ENCODE measurements at regions of chr22 and their contacts with region 1.

Region 1: DNA sequence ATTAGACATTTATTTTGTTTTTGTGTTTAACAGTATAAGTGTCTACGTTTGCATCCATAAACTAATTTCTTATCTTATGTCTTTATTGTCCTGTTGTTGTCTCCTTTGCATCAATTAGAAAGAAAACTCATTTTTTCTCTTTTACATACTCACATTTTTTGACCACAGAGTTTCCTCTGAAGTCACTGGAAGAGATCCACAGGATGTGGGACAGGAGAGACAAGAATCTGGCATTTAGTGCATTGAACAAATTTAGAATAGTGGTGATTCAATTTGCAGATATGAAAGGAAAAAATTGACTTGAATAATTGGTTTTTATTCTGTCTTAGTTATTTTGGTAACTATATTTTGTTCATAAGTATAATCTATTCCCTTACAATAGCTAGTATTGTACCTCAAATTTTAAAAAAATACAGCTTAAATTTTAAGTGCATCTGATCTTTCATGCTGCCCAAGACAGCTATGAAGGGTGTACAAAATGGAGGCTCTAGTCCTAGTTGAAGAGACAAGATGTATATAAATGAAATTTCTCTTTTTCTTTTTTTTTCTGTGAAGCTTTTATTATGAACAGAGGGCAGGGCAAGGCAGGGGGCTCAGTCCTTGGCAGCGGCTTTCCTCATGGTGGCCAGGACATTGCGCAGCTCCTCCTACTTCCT is 24.4 kb downstream of the HORMAD2 start:
- DNase-seq: peak; percentile 22
- ATAC-seq: peak; percentile 75
- H3K4me3 Mint-ChIP-seq: no peak overlapping the region
- H3K27ac Mint-ChIP-seq: peak overlapping the region; percentile 81
- H3K4me1 Mint-ChIP-seq: peaks cover 33% of the 10 kb centered on the region
- H3K27me3 Mint-ChIP-seq: peaks cover 3% of the 10 kb centered on the region
- CTCF ChIP-seq: no peak

Region 2: GRCh38 chr22:29907815-29908515 is 196.7 kb before region 1 on chr22:
- CTCF ChIA-PET with region 1: no interaction called
- POLR2A ChIA-PET with region 1: no interaction called
- intact Hi-C with region 1: no loop called
- DNase-seq: peak; percentile 45
- ATAC-seq: no peak
- H3K4me3 Mint-ChIP-seq: no peak overlapping the region
- H3K27ac Mint-ChIP-seq: no peak overlapping the region
- H3K4me1 Mint-ChIP-seq: peaks cover 40% of the 10 kb centered on the region
- H3K27me3 Mint-ChIP-seq: no peaks in the 10 kb centered on the region
- CTCF ChIP-seq: no peak

Region 3: GRCh38 chr22:29994027-29994715 is 110.5 kb before region 1 on chr22:
- CTCF ChIA-PET with region 1: no interaction called
- POLR2A ChIA-PET with region 1: no interaction called
- intact Hi-C with region 1: no loop called
- DNase-seq: no peak
- ATAC-seq: peak; percentile 56
- H3K4me3 Mint-ChIP-seq: no peak overlapping the region
- H3K27ac Mint-ChIP-seq: no peak overlapping the region
- H3K4me1 Mint-ChIP-seq: peaks cover 7% of the 10 kb centered on the region
- H3K27me3 Mint-ChIP-seq: no peaks in the 10 kb centered on the region
- CTCF ChIP-seq: no peak

Region 4: DNA sequence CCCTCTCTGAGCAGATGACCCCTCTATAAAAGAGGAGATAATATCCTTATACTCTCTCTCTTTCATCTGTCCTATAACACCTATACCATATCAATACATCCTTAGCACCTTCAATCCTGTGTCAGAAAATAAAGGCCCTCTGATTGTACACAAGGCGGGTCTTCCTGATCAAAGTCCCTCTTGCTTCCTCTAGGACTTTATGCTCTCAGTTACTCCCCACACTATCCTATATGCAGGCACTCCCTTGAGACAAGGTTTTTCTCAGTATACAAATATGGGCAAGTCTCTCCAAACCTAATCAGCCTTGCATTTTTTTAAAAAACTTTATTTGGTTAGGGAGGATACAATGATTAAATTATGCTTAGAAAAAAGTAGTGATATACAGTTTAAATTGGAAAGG is 41.7 kb before region 1 on chr22:
- CTCF ChIA-PET with region 1: no interaction called
- POLR2A ChIA-PET with region 1: no interaction called
- intact Hi-C with region 1: no loop called
- DNase-seq: no peak
- ATAC-seq: no peak
- H3K4me3 Mint-ChIP-seq: no peak overlapping the region
- H3K27ac Mint-ChIP-seq: no peak overlapping the region
- H3K4me1 Mint-ChIP-seq: no peaks in the 10 kb centered on the region
- H3K27me3 Mint-ChIP-seq: peaks cover 1% of the 10 kb centered on the region
- CTCF ChIP-seq: no peak

Region 5: DNA sequence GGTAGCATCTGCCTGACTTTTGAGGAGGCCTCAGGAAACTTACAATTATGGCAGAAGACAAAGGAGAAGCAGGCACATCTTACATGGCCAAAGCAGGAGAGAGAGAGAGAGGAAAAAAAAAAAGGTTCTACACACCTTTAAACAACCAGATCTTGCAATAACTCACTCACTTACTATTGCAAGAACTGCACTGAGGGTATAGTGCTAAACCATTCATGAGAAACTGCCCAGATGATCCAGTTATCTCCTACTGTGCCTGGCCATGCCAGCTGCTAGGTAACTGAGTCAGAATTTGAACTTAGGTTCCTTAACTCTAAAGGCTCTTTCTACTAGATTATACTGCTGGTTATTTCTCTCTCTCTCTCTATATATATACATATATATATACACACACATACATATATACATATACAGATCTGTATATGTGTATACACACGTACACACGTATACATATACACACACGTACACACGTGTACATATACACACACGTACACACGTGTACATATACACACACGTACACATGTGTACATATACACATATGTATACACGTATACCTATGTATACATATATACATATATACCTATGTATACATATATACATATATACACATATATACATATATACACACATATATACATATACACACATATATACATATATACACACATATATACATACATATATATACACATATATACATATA is 16.9 kb before region 1 on chr22:
- CTCF ChIA-PET with region 1: interaction called, 10 read pairs
- POLR2A ChIA-PET with region 1: no interaction called
- intact Hi-C with region 1: no loop called
- DNase-seq: no peak
- ATAC-seq: no peak
- H3K4me3 Mint-ChIP-seq: no peak overlapping the region
- H3K27ac Mint-ChIP-seq: no peak overlapping the region
- H3K4me1 Mint-ChIP-seq: peaks cover 9% of the 10 kb centered on the region
- H3K27me3 Mint-ChIP-seq: peaks cover 14% of the 10 kb centered on the region
- CTCF ChIP-seq: no peak

Region 6: DNA sequence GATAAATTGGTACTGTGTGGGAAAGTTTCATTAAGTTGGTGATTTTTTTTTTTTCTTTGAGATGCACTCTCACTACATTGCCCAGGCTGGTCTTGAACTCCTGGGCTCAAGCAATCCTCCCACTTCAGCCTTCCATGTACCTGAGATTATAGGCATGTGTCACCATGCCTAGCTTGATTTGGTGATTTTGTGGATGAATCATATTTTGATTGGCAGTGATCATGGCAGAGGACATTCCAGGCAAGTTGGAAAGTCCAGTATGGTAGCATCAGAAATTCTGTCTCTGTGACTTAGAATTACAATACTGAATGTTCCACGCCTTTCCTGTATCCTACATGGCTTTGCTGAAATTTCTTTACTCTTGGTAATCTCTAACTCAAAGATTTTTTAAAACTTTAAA is 25.0 kb after region 1 on chr22:
- CTCF ChIA-PET with region 1: interaction called, 11 read pairs
- POLR2A ChIA-PET with region 1: no interaction called
- intact Hi-C with region 1: no loop called
- DNase-seq: no peak
- ATAC-seq: no peak
- H3K4me3 Mint-ChIP-seq: no peak overlapping the region
- H3K27ac Mint-ChIP-seq: no peak overlapping the region
- H3K4me1 Mint-ChIP-seq: peaks cover 5% of the 10 kb centered on the region
- H3K27me3 Mint-ChIP-seq: no peaks in the 10 kb centered on the region
- CTCF ChIP-seq: no peak

Region 7: DNA sequence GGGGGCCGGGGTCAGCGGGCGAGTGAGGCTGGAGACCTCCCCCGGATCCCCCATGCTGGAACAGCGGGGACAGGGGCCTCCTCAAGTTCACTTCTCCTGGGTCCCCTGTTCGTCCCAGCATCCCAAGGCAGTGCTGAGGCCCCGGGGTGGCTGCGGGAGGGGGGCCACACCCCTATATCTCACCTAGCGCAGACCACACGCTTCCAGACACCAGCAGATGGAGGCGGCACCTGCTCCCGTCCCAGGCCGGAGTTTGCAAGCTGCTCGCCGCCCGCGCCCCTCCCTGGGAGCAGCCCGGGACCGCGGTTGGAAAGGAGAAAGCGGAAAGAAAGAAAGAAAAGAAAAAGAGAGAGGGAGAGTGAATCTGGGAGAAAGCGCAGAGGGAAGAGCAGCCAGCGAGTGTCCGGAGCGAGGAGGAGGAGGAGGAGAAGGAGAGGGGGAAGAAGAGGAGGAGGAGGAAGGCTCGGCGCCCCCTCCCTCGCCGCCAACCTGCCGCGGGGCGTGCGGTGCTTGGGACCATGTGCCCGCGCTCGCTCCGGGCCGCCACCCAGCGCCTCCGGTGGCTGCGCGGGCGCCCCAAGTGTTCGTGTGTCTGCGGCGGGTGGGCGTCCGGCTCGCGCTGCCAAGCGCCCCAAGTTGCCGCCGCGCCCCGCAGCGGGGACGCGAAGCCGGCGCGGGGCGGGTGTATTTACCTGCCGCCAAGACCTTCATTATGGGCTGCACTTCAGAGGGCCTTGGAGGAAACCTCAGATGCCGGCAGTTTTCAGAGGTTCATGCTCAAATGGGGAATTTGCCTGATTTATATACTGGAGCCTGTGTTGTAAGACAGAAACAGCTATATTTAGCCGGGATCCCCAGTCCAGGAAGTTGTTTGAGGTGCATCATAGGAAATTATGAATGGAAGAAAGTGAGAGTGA is 141.6 kb after region 1 on chr22 and contains the start of gene LIF:
- CTCF ChIA-PET with region 1: interaction called, 11 read pairs
- POLR2A ChIA-PET with region 1: interaction called, 3 read pairs
- intact Hi-C with region 1: no loop called
- DNase-seq: peak; percentile 74
- ATAC-seq: peak; percentile 57
- H3K4me3 Mint-ChIP-seq: peak within 1 kb of the TSS; percentile 97
- H3K27ac Mint-ChIP-seq: peak within 1 kb of the TSS; percentile 94
- H3K4me1 Mint-ChIP-seq: peaks cover 64% of the 10 kb centered on the region
- H3K27me3 Mint-ChIP-seq: peaks cover 1% of the 10 kb centered on the region
- CTCF ChIP-seq: no peak
- total RNA-seq, gene LIF: 160 to 161 TPM

Region 8: GRCh38 chr22:30262917-30263741 is 158.5 kb after region 1 on chr22:
- CTCF ChIA-PET with region 1: interaction called, 23 read pairs
- POLR2A ChIA-PET with region 1: interaction called, 5 read pairs
- intact Hi-C with region 1: no loop called
- DNase-seq: peak; percentile 88
- ATAC-seq: no peak
- H3K4me3 Mint-ChIP-seq: peak overlapping the region; percentile 95
- H3K27ac Mint-ChIP-seq: peak overlapping the region; percentile 83
- H3K4me1 Mint-ChIP-seq: peaks cover 31% of the 10 kb centered on the region
- H3K27me3 Mint-ChIP-seq: no peaks in the 10 kb centered on the region
- CTCF ChIP-seq: peak; percentile 100

Region 9: DNA sequence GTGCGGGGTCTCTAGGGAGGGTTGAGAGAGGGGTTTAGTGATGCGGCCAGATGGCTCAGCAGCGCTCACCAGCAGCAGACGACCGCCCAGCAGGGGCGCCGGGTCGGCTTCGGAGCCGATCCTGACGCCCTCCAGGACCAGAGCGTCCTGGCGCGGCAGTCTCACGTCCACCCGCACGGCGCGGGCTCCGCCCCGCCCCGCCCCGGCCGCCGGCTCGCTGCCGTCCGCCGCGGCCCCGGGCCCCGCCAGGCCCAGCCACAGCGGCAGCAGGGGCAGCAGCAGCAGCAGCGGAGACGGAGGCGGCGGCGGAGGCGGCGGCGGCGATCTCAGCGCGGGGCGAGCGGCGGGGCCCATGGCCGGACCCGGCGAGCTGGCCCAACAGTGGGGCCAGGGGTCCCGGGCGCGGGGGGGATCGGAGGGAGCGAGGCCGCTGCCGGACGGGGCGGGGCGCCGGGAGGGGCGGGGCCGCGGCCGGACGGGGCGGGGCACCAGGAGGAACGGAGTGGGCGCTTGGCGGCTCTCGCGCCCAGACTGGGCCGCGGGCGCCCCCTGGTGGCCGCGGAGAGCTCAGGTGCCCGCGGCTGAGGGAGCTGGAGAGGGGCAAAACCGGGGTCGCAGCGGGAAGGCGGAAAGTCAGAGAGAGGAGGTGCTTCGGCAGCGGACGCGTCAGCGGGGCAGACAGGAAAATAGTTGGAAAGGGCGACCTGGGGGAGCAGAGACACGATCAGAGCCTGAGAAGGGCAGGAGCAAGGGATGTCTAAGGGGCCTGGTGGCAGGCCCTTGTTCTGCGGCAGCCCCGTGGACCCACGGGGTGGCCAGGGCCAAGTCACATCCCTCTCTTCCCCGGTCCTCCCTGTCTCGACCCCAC is 282.6 kb after region 1 on chr22 and contains the start of gene RNF215:
- CTCF ChIA-PET with region 1: interaction called, 15 read pairs
- POLR2A ChIA-PET with region 1: no interaction called
- intact Hi-C with region 1: no loop called
- DNase-seq: peak; percentile 78
- ATAC-seq: peak; percentile 78
- H3K4me3 Mint-ChIP-seq: peak within 1 kb of the TSS; percentile 76
- H3K27ac Mint-ChIP-seq: peak within 1 kb of the TSS; percentile 43
- H3K4me1 Mint-ChIP-seq: peaks cover 15% of the 10 kb centered on the region
- H3K27me3 Mint-ChIP-seq: no peaks in the 10 kb centered on the region
- CTCF ChIP-seq: peak; percentile 89
- total RNA-seq, gene RNF215: 7.1 to 7.2 TPM